A549 (cell line): ENCODE measurements at regions of chr1 and their contacts with region 1.

Region 1: GRCh38 chr1:2174348-2175054 is 20.1 kb downstream of the FAAP20 start:
- DNase-seq: peak; percentile 54 to 86
- ATAC-seq: peak; percentile 83 to 93
- H3K4me3 ChIP-seq: no peak overlapping the region
- H3K27ac ChIP-seq: no peak overlapping the region
- H3K4me1 ChIP-seq: no peaks in the 10 kb centered on the region
- CTCF ChIP-seq: peak; percentile 60
- EP300 ChIP-seq: no peak
- POLR2A ChIP-seq: no peak
- RAD21 ChIP-seq: peak; percentile 42 to 57

Region 2: GRCh38 chr1:2141036-2141435 is 33.5 kb before region 1 on chr1:
- CTCF ChIA-PET with region 1: interaction called, 18 read pairs
- POLR2A ChIA-PET with region 1: no interaction called
- DNase-seq: no peak
- ATAC-seq: no peak
- H3K4me3 ChIP-seq: no peak overlapping the region
- H3K27ac ChIP-seq: no peak overlapping the region
- H3K4me1 ChIP-seq: peaks cover 7% of the 10 kb centered on the region
- CTCF ChIP-seq: no peak
- EP300 ChIP-seq: no peak
- POLR2A ChIP-seq: no peak
- RAD21 ChIP-seq: no peak

Region 3: GRCh38 chr1:2163205-2163604 is 11.3 kb before region 1 on chr1:
- CTCF ChIA-PET with region 1: interaction called, 28 read pairs
- POLR2A ChIA-PET with region 1: no interaction called
- DNase-seq: no peak
- ATAC-seq: no peak
- H3K4me3 ChIP-seq: no peak overlapping the region
- H3K27ac ChIP-seq: no peak overlapping the region
- H3K4me1 ChIP-seq: no peaks in the 10 kb centered on the region
- CTCF ChIP-seq: no peak
- EP300 ChIP-seq: no peak
- POLR2A ChIP-seq: no peak
- RAD21 ChIP-seq: no peak

Region 4: GRCh38 chr1:2189459-2190425 is 15.2 kb after region 1 on chr1:
- CTCF ChIA-PET with region 1: interaction called, 18 read pairs
- POLR2A ChIA-PET with region 1: no interaction called
- DNase-seq: peak; percentile 71 to 88
- ATAC-seq: peak; percentile 83 to 93
- H3K4me3 ChIP-seq: peak overlapping the region; percentile 42
- H3K27ac ChIP-seq: peak overlapping the region; percentile 66 to 89
- H3K4me1 ChIP-seq: peaks cover 13% of the 10 kb centered on the region; the same call in 2 of the 3 replicates
- CTCF ChIP-seq: no peak
- EP300 ChIP-seq: no peak
- POLR2A ChIP-seq: peak; percentile 29; the same call in 1 of the 2 replicates
- RAD21 ChIP-seq: no peak

Region 5: DNA sequence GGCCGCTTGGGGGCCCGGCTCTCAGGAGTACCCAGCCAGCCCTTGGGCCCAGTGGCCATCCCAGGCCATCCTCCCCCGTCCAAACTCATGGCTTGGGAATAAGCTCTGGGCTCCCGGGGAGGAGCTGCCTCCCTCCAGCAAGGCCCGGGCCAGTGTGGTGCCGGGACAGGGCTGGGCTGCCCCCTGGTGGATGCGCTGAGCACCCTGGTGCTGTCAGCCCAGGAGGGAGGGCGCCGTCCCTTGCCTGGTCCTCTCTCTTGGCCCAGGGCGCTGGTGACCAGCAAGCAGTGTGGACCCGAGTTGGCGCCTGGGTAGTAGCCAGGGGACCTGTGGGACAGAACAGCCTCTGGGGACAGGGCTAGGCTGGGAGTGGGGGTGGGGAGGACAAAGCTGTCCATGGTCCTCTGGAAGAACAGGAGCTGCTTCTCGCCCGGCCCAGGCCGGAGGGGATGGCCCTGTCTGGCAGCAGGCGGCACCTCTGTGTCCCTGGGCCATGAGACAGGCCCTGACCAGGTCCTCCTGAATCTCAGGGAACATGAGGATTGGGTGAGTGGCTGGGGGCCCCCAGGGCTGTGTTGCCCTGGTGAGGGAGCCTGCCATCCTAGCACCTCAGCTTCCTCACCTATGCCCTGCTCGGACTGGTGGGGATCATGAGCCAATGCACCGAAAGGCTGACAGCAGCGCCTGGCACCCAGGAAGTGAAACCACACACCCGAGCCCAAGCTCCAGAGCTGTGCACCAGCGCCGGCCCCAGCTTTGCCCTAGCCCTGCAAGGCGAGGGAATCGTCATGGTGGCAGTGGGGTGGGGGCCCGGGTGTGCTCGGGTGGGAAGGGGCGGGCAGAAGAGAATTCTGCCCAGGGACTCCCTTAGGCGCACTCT is 207.5 kb after region 1 on chr1:
- CTCF ChIA-PET with region 1: interaction called, 13 read pairs
- POLR2A ChIA-PET with region 1: no interaction called
- DNase-seq: peak; percentile 67 to 89
- ATAC-seq: peak; percentile 90 to 98
- H3K4me3 ChIP-seq: no peak overlapping the region
- H3K27ac ChIP-seq: no peak overlapping the region
- H3K4me1 ChIP-seq: no peaks in the 10 kb centered on the region
- CTCF ChIP-seq: peak; percentile 68
- EP300 ChIP-seq: no peak
- POLR2A ChIP-seq: no peak
- RAD21 ChIP-seq: peak; percentile 76 to 82